Caco-2 (cell line): ENCODE measurements at regions of chr4 and their contacts with region 1.

Region 1: GRCh38 chr4:24472514-24473308 is 111.6 kb downstream of the DHX15 start:
- DNase-seq: peak; percentile 81 to 84
- H3K4me3 ChIP-seq: peak overlapping the region; percentile 60
- H3K4me3 Mint-ChIP-seq: peak overlapping the region; percentile 91
- H3K27ac Mint-ChIP-seq: no peak overlapping the region
- H3K4me1 ChIP-seq: peaks cover 15% of the 10 kb centered on the region
- H3K4me1 Mint-ChIP-seq: peaks cover 14% of the 10 kb centered on the region
- H3K27me3 ChIP-seq: peaks cover 2% of the 10 kb centered on the region; the same call in 1 of the 2 replicates
- H3K27me3 Mint-ChIP-seq: peaks cover 48% of the 10 kb centered on the region
- CTCF ChIP-seq: peak; percentile 63 to 89

Region 2: DNA sequence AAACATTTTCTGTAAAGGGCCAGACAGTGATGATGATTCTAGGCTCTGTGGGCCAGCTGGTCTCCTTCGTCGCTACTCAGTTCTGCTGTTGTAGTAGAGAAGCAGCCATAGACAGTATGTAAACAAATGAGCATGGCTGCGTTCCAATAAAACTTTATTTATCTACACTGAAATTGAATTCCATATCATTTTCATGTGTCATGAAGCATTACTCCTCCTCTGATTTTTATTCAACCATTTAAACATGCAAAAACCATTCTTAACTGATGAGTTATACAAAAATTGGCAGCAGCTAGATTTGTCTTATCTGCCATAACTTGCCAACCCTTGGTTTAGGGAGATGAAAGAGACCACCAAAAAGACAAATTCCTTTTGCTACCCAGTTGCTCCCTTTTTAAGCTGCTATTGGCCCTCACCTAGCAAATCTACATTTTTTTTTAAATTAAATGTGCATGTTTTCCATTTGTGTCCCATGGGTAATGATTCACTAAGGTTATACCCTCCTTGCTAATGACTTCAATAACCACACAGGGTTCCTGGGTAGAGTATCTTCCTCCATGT is 198.2 kb before region 1 on chr4:
- CTCF ChIA-PET with region 1: no interaction called
- POLR2A ChIA-PET with region 1: no interaction called
- intact Hi-C with region 1: no loop called
- DNase-seq: no peak
- H3K4me3 ChIP-seq: no peak overlapping the region
- H3K4me3 Mint-ChIP-seq: no peak overlapping the region
- H3K27ac Mint-ChIP-seq: no peak overlapping the region
- H3K4me1 ChIP-seq: no peaks in the 10 kb centered on the region
- H3K4me1 Mint-ChIP-seq: peaks cover 4% of the 10 kb centered on the region
- H3K27me3 ChIP-seq: no peaks in the 10 kb centered on the region
- H3K27me3 Mint-ChIP-seq: peaks cover 4% of the 10 kb centered on the region
- CTCF ChIP-seq: no peak

Region 3: GRCh38 chr4:24453951-24454350 is 18.8 kb before region 1 on chr4:
- CTCF ChIA-PET with region 1: no interaction called
- POLR2A ChIA-PET with region 1: no interaction called
- intact Hi-C with region 1: no loop called
- DNase-seq: no peak
- H3K4me3 ChIP-seq: no peak overlapping the region
- H3K4me3 Mint-ChIP-seq: no peak overlapping the region
- H3K27ac Mint-ChIP-seq: no peak overlapping the region
- H3K4me1 ChIP-seq: no peaks in the 10 kb centered on the region
- H3K4me1 Mint-ChIP-seq: no peaks in the 10 kb centered on the region
- H3K27me3 ChIP-seq: no peaks in the 10 kb centered on the region
- H3K27me3 Mint-ChIP-seq: peaks cover 21% of the 10 kb centered on the region
- CTCF ChIP-seq: no peak

Region 4: GRCh38 chr4:24988776-24989175 is 516.1 kb after region 1 on chr4:
- CTCF ChIA-PET with region 1: interaction called, 8 read pairs
- POLR2A ChIA-PET with region 1: no interaction called
- intact Hi-C with region 1: loop called (anchors 5 kb)
- DNase-seq: peak; percentile 46 to 52
- H3K4me3 ChIP-seq: no peak overlapping the region
- H3K4me3 Mint-ChIP-seq: no peak overlapping the region
- H3K27ac Mint-ChIP-seq: no peak overlapping the region
- H3K4me1 ChIP-seq: no peaks in the 10 kb centered on the region
- H3K4me1 Mint-ChIP-seq: no peaks in the 10 kb centered on the region
- H3K27me3 ChIP-seq: no peaks in the 10 kb centered on the region; the same call in 1 of the 2 replicates
- H3K27me3 Mint-ChIP-seq: no peaks in the 10 kb centered on the region
- CTCF ChIP-seq: peak; percentile 14 to 25